ENCODE measurements at regions of chr1 and their contacts with region 1.

Region 1: GRCh38 chr1:156728597-156729462 is at the start of gene ISG20L2:
- DNase-seq: peak; percentile 96
- ATAC-seq: peak; percentile 90
- H3K4me3 Mint-ChIP-seq: no peak within 1 kb of the TSS
- H3K27ac Mint-ChIP-seq: peak within 1 kb of the TSS; percentile 99
- H3K4me1 Mint-ChIP-seq: peaks cover 14% of the 10 kb centered on the region
- H3K27me3 Mint-ChIP-seq: no peaks in the 10 kb centered on the region
- CTCF ChIP-seq: no peak
- total RNA-seq, gene ISG20L2: 37.2 to 43.8 TPM (median 42.2 TPM) in 3 replicates

Region 2: GRCh38 chr1:156394835-156395461 is 333.9 kb before region 1 on chr1:
- CTCF ChIA-PET with region 1: no interaction called
- POLR2A ChIA-PET with region 1: no interaction called
- DNase-seq: no peak
- ATAC-seq: no peak
- H3K4me3 Mint-ChIP-seq: no peak overlapping the region
- H3K27ac Mint-ChIP-seq: no peak overlapping the region
- H3K4me1 Mint-ChIP-seq: peaks cover 42% of the 10 kb centered on the region
- H3K27me3 Mint-ChIP-seq: peaks cover 29% of the 10 kb centered on the region
- CTCF ChIP-seq: no peak

Region 3: GRCh38 chr1:156625436-156626078 is 103.3 kb before region 1 on chr1:
- CTCF ChIA-PET with region 1: interaction called, 31 read pairs
- POLR2A ChIA-PET with region 1: no interaction called
- DNase-seq: peak; percentile 66
- ATAC-seq: peak; percentile 40
- H3K4me3 Mint-ChIP-seq: peak overlapping the region; percentile 79
- H3K27ac Mint-ChIP-seq: no peak overlapping the region
- H3K4me1 Mint-ChIP-seq: peaks cover 6% of the 10 kb centered on the region
- H3K27me3 Mint-ChIP-seq: peaks cover 83% of the 10 kb centered on the region
- CTCF ChIP-seq: peak; percentile 94

Region 4: GRCh38 chr1:156697481-156697880 is 31.3 kb before region 1 on chr1:
- CTCF ChIA-PET with region 1: interaction called, 682 read pairs
- POLR2A ChIA-PET with region 1: interaction called, 57 read pairs
- DNase-seq: no peak
- ATAC-seq: no peak
- H3K4me3 Mint-ChIP-seq: no peak overlapping the region
- H3K27ac Mint-ChIP-seq: no peak overlapping the region
- H3K4me1 Mint-ChIP-seq: peaks cover 38% of the 10 kb centered on the region
- H3K27me3 Mint-ChIP-seq: no peaks in the 10 kb centered on the region; the same call in 1 of the 2 replicates
- CTCF ChIP-seq: no peak

Region 5: GRCh38 chr1:156751758-156752757 is 23.2 kb after region 1 on chr1:
- CTCF ChIA-PET with region 1: interaction called, 43 read pairs
- POLR2A ChIA-PET with region 1: interaction called, 14 read pairs
- DNase-seq: peak; percentile 97
- ATAC-seq: peak; percentile 67
- H3K4me3 Mint-ChIP-seq: peak overlapping the region; percentile 96
- H3K27ac Mint-ChIP-seq: peak overlapping the region; percentile 97
- H3K4me1 Mint-ChIP-seq: peaks cover 43% of the 10 kb centered on the region
- H3K27me3 Mint-ChIP-seq: no peaks in the 10 kb centered on the region
- CTCF ChIP-seq: no peak

Region 6: DNA sequence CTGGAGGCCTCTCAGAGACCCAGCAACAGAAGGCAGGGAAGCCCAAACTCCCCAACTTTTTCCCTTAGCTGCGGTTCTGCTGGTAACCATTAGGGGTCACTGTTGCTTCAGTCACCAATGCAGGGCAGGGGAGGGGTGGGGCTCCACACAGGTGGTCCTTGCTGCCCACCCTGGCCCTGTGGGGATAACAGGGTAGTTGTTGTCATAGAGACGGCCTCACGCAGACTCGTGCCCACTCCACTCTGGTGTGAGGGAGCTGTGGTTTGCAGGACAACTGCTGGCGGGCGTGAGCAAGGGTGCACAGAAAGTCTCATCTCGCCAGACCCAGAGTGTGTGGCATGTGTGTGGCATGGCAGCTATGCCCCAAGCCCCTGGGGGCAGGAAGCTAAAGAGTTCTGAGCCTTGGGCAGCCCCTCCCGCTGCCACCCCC is 110.2 kb after region 1 on chr1:
- CTCF ChIA-PET with region 1: interaction called, 21 read pairs
- POLR2A ChIA-PET with region 1: no interaction called
- DNase-seq: peak; percentile 67
- ATAC-seq: peak; percentile 83
- H3K4me3 Mint-ChIP-seq: no peak overlapping the region
- H3K27ac Mint-ChIP-seq: no peak overlapping the region
- H3K4me1 Mint-ChIP-seq: peaks cover 5% of the 10 kb centered on the region
- H3K27me3 Mint-ChIP-seq: peaks cover 61% of the 10 kb centered on the region
- CTCF ChIP-seq: peak; percentile 87

Region 7: GRCh38 chr1:156920233-156921052 is 191.6 kb after region 1 on chr1 and contains the start of gene LRRC71:
- CTCF ChIA-PET with region 1: interaction called, 11 read pairs
- POLR2A ChIA-PET with region 1: no interaction called
- DNase-seq: peak; percentile 94
- ATAC-seq: peak; percentile 89
- H3K4me3 Mint-ChIP-seq: peak within 1 kb of the TSS; percentile 67
- H3K27ac Mint-ChIP-seq: no peak within 1 kb of the TSS
- H3K4me1 Mint-ChIP-seq: peaks cover 15% of the 10 kb centered on the region
- H3K27me3 Mint-ChIP-seq: peaks cover 96% of the 10 kb centered on the region
- CTCF ChIP-seq: peak; percentile 94
- total RNA-seq, gene LRRC71: 0.18 to 0.30 TPM (median 0.22 TPM) in 3 replicates

Region 8: GRCh38 chr1:157209514-157209913 is 480.7 kb after region 1 on chr1:
- CTCF ChIA-PET with region 1: no interaction called
- POLR2A ChIA-PET with region 1: no interaction called
- DNase-seq: no peak
- ATAC-seq: peak; percentile 65
- H3K4me3 Mint-ChIP-seq: no peak overlapping the region
- H3K27ac Mint-ChIP-seq: no peak overlapping the region
- H3K4me1 Mint-ChIP-seq: no peaks in the 10 kb centered on the region; the same call in 1 of the 2 replicates
- H3K27me3 Mint-ChIP-seq: peaks cover 7% of the 10 kb centered on the region
- CTCF ChIP-seq: no peak

Measured in WTC11 (cell line).